Activated CD8-positive, alpha-beta T cell treated with anti-CD3 and anti-CD28 coated beads, Interleukin-2, amount 10 ng/mL, durations not matched to agents 7 days and 5 days (primary cell): ENCODE measurements at regions of chr9 and their contacts with region 1.

Region 1: GRCh38 chr9:22008736-22009562 is at the start of gene CDKN2B:
- DNase-seq: peak; percentile 76
- ATAC-seq: peak; percentile 84
- H3K4me3 Mint-ChIP-seq: peak within 1 kb of the TSS; percentile 82
- H3K27ac Mint-ChIP-seq: no peak within 1 kb of the TSS
- H3K4me1 Mint-ChIP-seq: peaks cover 37% of the 10 kb centered on the region
- H3K27me3 Mint-ChIP-seq: peaks cover 56% of the 10 kb centered on the region
- total RNA-seq, gene CDKN2B: 2.3 to 3.1 TPM

Region 2: GRCh38 chr9:21968331-21969010 is 40.5 kb before region 1 on chr9:
- CTCF ChIA-PET with region 1: interaction called, 20 read pairs
- POLR2A ChIA-PET with region 1: no interaction called
- DNase-seq: peak; percentile 34
- ATAC-seq: no peak
- H3K4me3 Mint-ChIP-seq: peak overlapping the region; percentile 56
- H3K27ac Mint-ChIP-seq: peak overlapping the region; percentile 39
- H3K4me1 Mint-ChIP-seq: peaks cover 48% of the 10 kb centered on the region
- H3K27me3 Mint-ChIP-seq: peaks cover 87% of the 10 kb centered on the region

Region 3: DNA sequence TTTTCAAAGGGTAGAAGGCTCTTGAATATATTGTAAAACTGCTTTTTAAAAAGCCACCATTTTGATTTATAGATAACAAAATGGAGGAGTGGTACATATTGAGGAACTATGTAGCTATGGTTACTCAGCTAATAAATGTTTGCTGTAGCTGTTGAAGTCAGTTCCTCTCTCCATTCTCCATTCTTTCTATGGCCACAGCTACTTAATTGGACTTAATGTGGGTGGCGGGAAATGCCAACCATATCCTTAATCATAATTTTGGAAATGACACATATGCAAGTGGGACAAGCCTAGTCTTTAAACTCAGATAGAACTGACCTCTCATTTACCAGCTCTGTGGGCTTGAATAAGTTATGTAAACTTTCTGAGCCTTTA is 25.4 kb before region 1 on chr9:
- CTCF ChIA-PET with region 1: interaction called, 27 read pairs
- POLR2A ChIA-PET with region 1: no interaction called
- DNase-seq: no peak
- ATAC-seq: no peak
- H3K4me3 Mint-ChIP-seq: no peak overlapping the region
- H3K27ac Mint-ChIP-seq: no peak overlapping the region
- H3K4me1 Mint-ChIP-seq: peaks cover 13% of the 10 kb centered on the region
- H3K27me3 Mint-ChIP-seq: peaks cover 72% of the 10 kb centered on the region

Region 4: DNA sequence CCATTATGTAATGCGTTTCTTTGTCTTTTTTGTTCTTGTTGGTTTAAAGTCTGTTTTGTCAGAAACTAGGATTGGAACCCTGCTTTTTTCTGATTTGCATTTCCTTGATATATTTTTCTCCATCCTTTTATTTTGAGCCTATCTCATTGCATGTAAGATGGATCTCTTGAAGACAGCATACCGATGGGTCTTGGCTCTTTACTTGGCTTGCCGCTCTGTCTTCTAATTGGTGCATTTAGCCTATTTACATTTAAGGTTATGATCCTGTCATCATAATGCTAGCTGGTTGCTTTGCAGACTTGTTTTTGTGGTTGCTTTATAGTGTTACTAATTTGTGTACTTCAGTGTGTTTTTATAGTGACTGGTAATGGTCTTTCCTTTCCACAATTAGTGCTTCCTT is 13.4 kb after region 1 on chr9:
- CTCF ChIA-PET with region 1: interaction called, 26 read pairs
- POLR2A ChIA-PET with region 1: no interaction called
- DNase-seq: no peak
- ATAC-seq: no peak
- H3K4me3 Mint-ChIP-seq: no peak overlapping the region
- H3K27ac Mint-ChIP-seq: no peak overlapping the region
- H3K4me1 Mint-ChIP-seq: no peaks in the 10 kb centered on the region
- H3K27me3 Mint-ChIP-seq: peaks cover 35% of the 10 kb centered on the region

Region 5: GRCh38 chr9:22037954-22038690 is 29.2 kb after region 1 on chr9:
- CTCF ChIA-PET with region 1: interaction called, 95 read pairs
- POLR2A ChIA-PET with region 1: no interaction called
- DNase-seq: no peak
- ATAC-seq: no peak
- H3K4me3 Mint-ChIP-seq: no peak overlapping the region
- H3K27ac Mint-ChIP-seq: no peak overlapping the region
- H3K4me1 Mint-ChIP-seq: peaks cover 58% of the 10 kb centered on the region
- H3K27me3 Mint-ChIP-seq: peaks cover 14% of the 10 kb centered on the region

Region 6: DNA sequence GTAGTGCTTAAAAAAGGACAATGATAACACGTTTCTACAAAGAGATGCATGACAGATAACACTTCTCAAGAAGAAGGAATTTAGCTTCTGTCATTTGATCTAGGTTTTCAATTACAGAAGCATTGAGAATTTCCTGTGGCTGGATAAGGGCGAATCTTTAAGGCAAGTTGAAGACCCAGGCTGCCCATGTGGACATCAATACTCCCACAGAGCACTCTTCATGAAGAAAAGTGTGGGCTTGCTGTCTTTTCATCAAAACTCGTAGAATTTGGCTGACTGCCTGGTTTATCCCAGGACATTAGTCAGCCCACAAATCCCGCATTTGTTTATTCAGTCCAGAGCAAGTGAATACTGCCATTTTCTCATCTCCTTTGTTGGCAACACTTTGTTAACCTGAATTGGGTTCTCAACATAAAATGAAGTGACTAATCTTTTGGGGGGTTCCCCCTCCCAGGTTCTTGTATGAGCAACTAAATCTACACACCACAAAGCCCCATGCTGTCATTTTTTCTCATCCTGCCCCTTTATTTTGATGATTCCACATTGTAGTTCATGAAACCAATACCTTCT is 43.5 kb after region 1 on chr9:
- CTCF ChIA-PET with region 1: interaction called, 20 read pairs
- POLR2A ChIA-PET with region 1: no interaction called
- DNase-seq: peak; percentile 65
- ATAC-seq: peak; percentile 72
- H3K4me3 Mint-ChIP-seq: peak overlapping the region; percentile 9
- H3K27ac Mint-ChIP-seq: peak overlapping the region; percentile 77
- H3K4me1 Mint-ChIP-seq: peaks cover 75% of the 10 kb centered on the region
- H3K27me3 Mint-ChIP-seq: peaks cover 5% of the 10 kb centered on the region

Region 7: GRCh38 chr9:22119537-22120158 is 110.7 kb after region 1 on chr9:
- CTCF ChIA-PET with region 1: interaction called, 35 read pairs
- POLR2A ChIA-PET with region 1: no interaction called
- DNase-seq: peak; percentile 56
- ATAC-seq: peak; percentile 91
- H3K4me3 Mint-ChIP-seq: no peak overlapping the region
- H3K27ac Mint-ChIP-seq: no peak overlapping the region
- H3K4me1 Mint-ChIP-seq: peaks cover 35% of the 10 kb centered on the region
- H3K27me3 Mint-ChIP-seq: peaks cover 41% of the 10 kb centered on the region